Left colon (tissue), 2 donors: ENCODE measurements at regions of chr2 and their contacts with region 1.

Region 1: GRCh38 chr2:67642053-67642397 is 244.9 kb downstream of the ETAA1 start:
- DNase-seq: no peak
- ATAC-seq: no peak

Region 2: GRCh38 chr2:65722028-65722778 is 1919.8 kb before region 1 on chr2:
- intact Hi-C with region 1: loop called in 1 of 2 experiments (anchors 5 kb)
- DNase-seq: peak in 1 of 2 donors; percentile 19
- ATAC-seq: no peak

Region 3: DNA sequence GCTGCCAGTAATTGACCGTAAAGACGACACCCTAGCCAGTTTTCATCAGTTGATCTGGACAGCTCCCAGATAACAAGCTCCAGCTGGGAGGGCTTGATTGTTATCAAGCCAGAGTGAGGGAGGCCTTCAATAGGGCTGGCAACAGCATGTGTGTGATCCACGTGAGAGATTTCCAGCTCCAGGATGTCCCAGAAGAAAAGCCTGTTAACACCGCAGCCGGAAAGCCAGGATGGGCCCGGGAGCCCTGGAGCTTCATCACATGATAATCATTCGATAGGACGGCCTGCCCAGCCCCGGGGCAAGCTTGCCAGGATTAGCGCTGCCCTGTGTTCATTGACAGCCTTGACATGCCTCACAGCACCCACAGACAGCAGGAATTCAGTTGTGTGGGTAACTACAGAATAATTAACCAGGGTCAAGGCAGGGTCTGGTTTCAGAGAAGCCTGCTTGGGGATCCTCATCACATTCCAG is 238.3 kb after region 1 on chr2:
- intact Hi-C with region 1: no loop called
- DNase-seq: no peak
- ATAC-seq: no peak